ENCODE measurements at regions of chr7 and their contacts with region 1.

Region 1: GRCh38 chr7:106870983-106871410 is 5.9 kb downstream of the PIK3CG start:
- DNase-seq: no peak
- ATAC-seq: peak; percentile 85
- H3K4me3 Mint-ChIP-seq: peak overlapping the region; percentile 48
- H3K27ac Mint-ChIP-seq: peak overlapping the region; percentile 76
- H3K4me1 Mint-ChIP-seq: peaks cover 74% of the 10 kb centered on the region
- H3K27me3 Mint-ChIP-seq: no peaks in the 10 kb centered on the region
- CTCF ChIP-seq: no peak

Region 2: GRCh38 chr7:106693677-106694353 is 177.2 kb before region 1 on chr7:
- CTCF ChIA-PET with region 1: no interaction called
- POLR2A ChIA-PET with region 1: no interaction called
- intact Hi-C with region 1: no loop called
- DNase-seq: no peak
- ATAC-seq: no peak
- H3K4me3 Mint-ChIP-seq: no peak overlapping the region
- H3K27ac Mint-ChIP-seq: no peak overlapping the region
- H3K4me1 Mint-ChIP-seq: peaks cover 17% of the 10 kb centered on the region
- H3K27me3 Mint-ChIP-seq: no peaks in the 10 kb centered on the region
- CTCF ChIP-seq: no peak

Region 3: GRCh38 chr7:106915873-106916272 is 44.9 kb after region 1 on chr7:
- CTCF ChIA-PET with region 1: no interaction called
- POLR2A ChIA-PET with region 1: no interaction called
- intact Hi-C with region 1: loop called (anchors 5 kb)
- DNase-seq: peak; percentile 40
- ATAC-seq: peak; percentile 88
- H3K4me3 Mint-ChIP-seq: no peak overlapping the region
- H3K27ac Mint-ChIP-seq: no peak overlapping the region
- H3K4me1 Mint-ChIP-seq: peaks cover 6% of the 10 kb centered on the region
- H3K27me3 Mint-ChIP-seq: no peaks in the 10 kb centered on the region
- CTCF ChIP-seq: no peak

Measured in activated CD8-positive, alpha-beta T cell treated with anti-CD3 and anti-CD28 coated beads for 36 hours (primary cell).